ENCODE measurements at regions of chr17 and their contacts with region 1.

Region 1: GRCh38 chr17:78289802-78290363 is 58.5 kb downstream of the TMEM235 start:
- DNase-seq: peak; percentile 81 to 85 (median 84)
- ATAC-seq: peak; percentile 79 to 93 (median 92)
- H3K4me3 ChIP-seq: no peak overlapping the region
- H3K27ac ChIP-seq: no peak overlapping the region
- H3K4me1 ChIP-seq: peaks cover 0 to 22% (median 4%) of the 10 kb centered on the region in 12 donors
- H3K27me3 ChIP-seq: no peaks in the 10 kb centered on the region
- CTCF ChIP-seq: peak; percentile 54 to 83 (median 72)
- POLR2A ChIP-seq: no peak

Region 2: GRCh38 chr17:78140169-78140976 is 149.5 kb before region 1 on chr17:
- intact Hi-C with region 1: no loop called
- DNase-seq: peak; percentile 83 to 96 (median 91)
- ATAC-seq: peak; percentile 80 to 89 (median 87)
- H3K4me3 ChIP-seq: peak overlapping the region in 2 of 12 donors; percentile 5 to 11
- H3K27ac ChIP-seq: peak overlapping the region in 1 of 12 donors; percentile 37
- H3K4me1 ChIP-seq: peaks cover 11 to 66% (median 20%) of the 10 kb centered on the region in 12 donors
- H3K27me3 ChIP-seq: no peaks in the 10 kb centered on the region
- CTCF ChIP-seq: no peak
- POLR2A ChIP-seq: peak in 1 of 2 donors; percentile 27

Region 3: GRCh38 chr17:78341559-78342448 is 51.9 kb after region 1 on chr17:
- intact Hi-C with region 1: loop called in 2 of 10 experiments (anchors 5 to 10 kb)
- DNase-seq: peak; percentile 86 to 90 (median 88)
- ATAC-seq: peak; percentile 32 to 77 (median 70)
- H3K4me3 ChIP-seq: peak overlapping the region in 11 of 12 donors; percentile 13 to 62 (median 49)
- H3K27ac ChIP-seq: peak overlapping the region; percentile 76 to 100 (median 92)
- H3K4me1 ChIP-seq: peaks cover 19 to 80% (median 39%) of the 10 kb centered on the region in 12 donors
- H3K27me3 ChIP-seq: no peaks in the 10 kb centered on the region
- CTCF ChIP-seq: peak in 7 of 12 donors; percentile 2 to 29 (median 12)
- POLR2A ChIP-seq: no peak

Region 4: GRCh38 chr17:78360371-78361224 is 70.7 kb after region 1 on chr17:
- intact Hi-C with region 1: loop called in 8 of 10 experiments (anchors 1 to 5 kb)
- DNase-seq: peak; percentile 92 to 97 (median 94)
- ATAC-seq: peak; percentile 70 to 77 (median 72)
- H3K4me3 ChIP-seq: peak overlapping the region in 11 of 12 donors; percentile 37 to 97 (median 80)
- H3K27ac ChIP-seq: peak overlapping the region; percentile 85 to 100 (median 96)
- H3K4me1 ChIP-seq: peaks cover 0 to 57% (median 41%) of the 10 kb centered on the region in 12 donors
- H3K27me3 ChIP-seq: no peaks in the 10 kb centered on the region
- CTCF ChIP-seq: peak; percentile 82 to 96 (median 93)
- POLR2A ChIP-seq: no peak

Measured in heart left ventricle (tissue), 16 donors.